Right ventricle myocardium superior (tissue), 1 donor: ENCODE measurements at regions of chr1 and their contacts with region 1.

Region 1: GRCh38 chr1:111990878-111991718 is 1.6 kb upstream of the KCND3 start:
- DNase-seq: peak; percentile 85
- ATAC-seq: peak; percentile 71

Region 2: DNA sequence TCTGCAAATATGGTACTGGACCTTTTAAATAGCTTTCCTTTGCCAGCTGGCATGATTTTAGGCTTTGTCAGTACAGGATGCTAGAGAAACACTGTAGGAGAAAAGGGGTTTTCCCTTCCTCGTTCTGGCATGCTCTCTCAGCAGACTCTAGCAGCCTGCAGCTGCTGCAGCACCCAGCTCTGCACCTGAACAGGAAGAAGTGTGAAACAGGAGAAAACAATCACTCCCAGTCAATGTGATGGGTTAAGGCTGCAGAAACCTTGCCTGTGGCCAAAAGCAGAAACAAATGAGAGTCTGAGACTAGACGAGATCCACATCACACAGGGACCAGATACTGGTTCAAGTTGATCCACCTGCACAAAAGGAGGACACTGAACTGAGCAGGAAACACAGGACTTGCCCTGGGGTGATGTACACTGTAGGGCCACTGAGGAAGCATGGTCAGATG is 584.8 kb before region 1 on chr1:
- intact Hi-C with region 1: no loop called
- DNase-seq: no peak
- ATAC-seq: peak; percentile 68

Region 3: GRCh38 chr1:111802110-111802509 is 189.0 kb before region 1 on chr1:
- intact Hi-C with region 1: loop called (anchors 2 kb)
- DNase-seq: peak; percentile 70
- ATAC-seq: peak; percentile 86

Region 4: GRCh38 chr1:112063781-112064728 is 73.0 kb after region 1 on chr1:
- intact Hi-C with region 1: no loop called
- DNase-seq: no peak
- ATAC-seq: peak; percentile 73

Region 5: DNA sequence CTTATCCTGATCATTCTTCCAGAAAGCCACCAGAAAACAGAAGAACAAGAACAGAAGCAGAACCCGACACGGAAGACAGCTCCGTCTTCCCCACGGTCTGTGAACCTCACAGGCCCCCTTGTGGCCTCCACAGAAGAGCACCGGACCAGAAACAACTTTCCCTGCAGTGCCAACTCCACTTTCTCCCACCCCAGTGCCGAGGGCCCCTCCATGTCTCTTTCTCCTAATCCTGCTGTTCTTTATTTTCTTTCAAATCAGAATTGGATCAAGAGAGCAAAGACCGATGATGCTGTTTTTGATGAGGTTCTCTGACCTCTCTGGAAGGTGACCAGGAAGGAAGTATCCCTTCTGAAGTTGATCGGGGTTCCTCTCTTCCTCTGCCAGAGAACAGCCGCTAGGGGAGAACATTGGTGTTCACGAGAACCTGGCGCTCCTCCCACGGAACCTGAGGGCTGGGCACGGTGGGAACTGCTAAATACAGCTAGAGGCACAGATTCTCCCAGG is 346.0 kb after region 1 on chr1:
- intact Hi-C with region 1: loop called (anchors 5 kb)
- DNase-seq: peak; percentile 63
- ATAC-seq: peak; percentile 94